PC-3 (cell line): ENCODE measurements at regions of chr21 and their contacts with region 1.

Region 1: DNA sequence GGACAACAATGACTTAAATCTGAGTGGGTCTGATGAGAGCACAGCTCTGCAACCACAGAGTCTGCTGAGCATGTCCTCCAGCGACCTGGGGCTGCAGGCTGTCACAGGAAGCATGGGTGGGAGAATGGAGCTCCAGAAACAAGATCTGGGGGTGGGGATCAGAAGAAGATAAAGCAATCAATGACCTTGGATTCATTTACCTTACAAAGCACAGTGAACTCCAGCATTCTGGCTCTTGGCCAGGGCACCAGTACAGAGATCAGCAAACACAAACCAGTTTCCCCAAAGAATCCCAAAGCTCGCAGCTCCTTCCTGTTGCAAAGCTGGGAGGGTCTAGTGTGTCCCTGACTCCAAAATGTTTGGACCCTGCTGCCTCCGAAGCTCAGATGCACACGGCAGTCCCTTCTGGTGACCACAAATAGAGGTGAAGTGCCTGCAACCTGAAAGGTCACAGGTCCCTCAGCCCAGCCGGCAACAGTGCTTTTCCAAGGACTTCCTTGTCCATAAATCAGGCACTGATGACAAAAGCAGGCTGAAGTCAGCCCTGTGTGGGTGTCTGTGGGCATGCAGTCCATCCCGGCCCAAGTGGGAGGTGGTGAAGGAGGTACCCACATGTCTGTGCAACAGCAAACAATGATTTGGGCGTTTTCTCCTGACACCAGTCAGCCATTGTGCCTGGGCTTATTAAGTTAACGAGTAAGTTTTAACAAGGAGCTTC is 76.1 kb downstream of the SH3BGR start:
- DNase-seq: no peak
- ATAC-seq: no peak
- H3K4me3 ChIP-seq: no peak overlapping the region
- H3K27ac ChIP-seq: no peak overlapping the region
- H3K4me1 ChIP-seq: no peaks in the 10 kb centered on the region
- H3K27me3 ChIP-seq: no peaks in the 10 kb centered on the region
- CTCF ChIP-seq: no peak

Region 2: DNA sequence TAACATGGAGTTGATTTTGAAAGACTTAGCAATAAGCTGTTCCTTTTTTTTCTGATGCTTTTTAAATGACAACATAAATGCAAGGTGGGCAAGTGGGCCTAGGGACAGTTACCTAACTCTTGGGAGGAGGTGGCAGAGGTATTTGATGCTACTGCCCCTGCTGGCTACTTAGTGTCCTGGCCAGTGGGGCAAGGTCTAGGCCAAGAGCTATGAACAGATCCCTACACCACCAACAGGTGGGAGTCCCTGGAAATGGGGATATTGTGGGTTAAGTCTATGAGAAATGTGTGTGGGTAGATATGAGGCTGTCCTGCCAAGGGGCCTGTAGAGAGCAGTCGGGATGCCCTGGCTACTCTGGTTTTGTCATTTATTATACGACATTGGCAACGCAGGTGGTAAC is 53.6 kb after region 1 on chr21:
- CTCF ChIA-PET with region 1: no interaction called
- POLR2A ChIA-PET with region 1: interaction called, 14 read pairs
- intact Hi-C with region 1: no loop called
- DNase-seq: no peak
- ATAC-seq: no peak
- H3K4me3 ChIP-seq: no peak overlapping the region
- H3K27ac ChIP-seq: no peak overlapping the region
- H3K4me1 ChIP-seq: no peaks in the 10 kb centered on the region
- H3K27me3 ChIP-seq: peaks cover 9% of the 10 kb centered on the region; the same call in 1 of the 2 replicates
- CTCF ChIP-seq: peak; percentile 32